HCT116 (cell line): ENCODE measurements at regions of chr2 and their contacts with region 1.

Region 1: DNA sequence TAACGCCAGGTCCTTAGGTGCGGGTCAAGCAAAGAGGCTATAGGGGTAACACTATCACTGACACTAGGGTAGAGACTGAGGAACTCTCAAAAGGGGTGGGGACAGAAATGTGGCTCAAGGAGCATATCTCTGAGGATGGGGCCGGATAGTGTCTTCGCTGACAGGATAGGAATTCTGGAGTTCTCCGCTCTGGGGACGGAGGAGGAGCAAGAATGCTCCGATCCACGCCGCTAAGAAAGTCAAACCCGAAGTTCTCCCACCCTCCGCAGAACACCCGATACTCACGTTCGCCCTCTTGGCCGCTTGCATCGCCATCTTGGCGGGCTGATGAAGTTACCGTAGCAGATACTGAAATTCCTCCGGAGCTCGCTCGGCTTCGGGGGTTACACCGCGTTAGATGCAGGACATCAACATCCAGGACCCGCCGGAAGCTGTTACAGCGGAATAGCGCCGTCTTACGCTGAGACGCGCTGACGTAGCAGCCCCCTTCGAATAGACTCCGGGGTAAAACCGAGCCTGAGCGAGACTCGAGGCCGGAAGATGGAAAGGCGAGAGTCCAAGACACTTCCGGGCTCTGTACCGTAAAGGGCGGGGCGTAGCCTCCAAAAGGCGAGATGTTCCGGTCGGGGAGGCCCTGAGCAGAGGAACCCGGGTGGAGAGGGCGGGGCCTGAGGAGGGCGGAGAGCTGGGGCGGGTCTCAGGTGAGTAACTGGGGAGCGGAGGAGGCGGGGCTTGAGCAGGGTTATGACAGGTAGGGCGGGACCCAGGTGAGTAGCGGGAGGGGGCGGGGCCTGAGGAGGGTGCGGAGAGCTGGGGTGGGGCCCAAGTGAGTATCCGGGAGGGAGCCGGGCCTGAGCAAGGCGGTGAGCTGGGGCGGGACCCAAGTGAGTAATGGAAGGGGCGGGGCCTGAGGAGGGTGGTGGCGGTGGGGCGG is at the start of gene SF3B6:
- DNase-seq: peak; percentile 99
- ATAC-seq: peak; percentile 86
- H3K4me3 ChIP-seq: peak within 1 kb of the TSS; percentile 73 to 77
- H3K27ac ChIP-seq: peak within 1 kb of the TSS; percentile 81
- H3K4me1 ChIP-seq: peaks cover 4 to 15% of the 10 kb centered on the region in 2 experiments; a peak in 3 of 4 replicates
- H3K27me3 ChIP-seq: no peaks in the 10 kb centered on the region
- CTCF ChIP-seq: no peak
- POLR2A ChIP-seq: peak; percentile 63
- RAD21 ChIP-seq: no peak
- total RNA-seq, gene SF3B6: 129 TPM

Region 2: GRCh38 chr2:23939987-23940717 is 136.0 kb before region 1 on chr2 and contains the start of gene UBXN2A:
- CTCF ChIA-PET with region 1: no interaction called
- POLR2A ChIA-PET with region 1: no interaction called
- RAD21 ChIA-PET with region 1: no interaction called
- intact Hi-C with region 1: loop called (anchors 5 kb)
- DNase-seq: peak; percentile 45
- ATAC-seq: peak; percentile 88
- H3K4me3 ChIP-seq: peak within 1 kb of the TSS; percentile 61 to 75
- H3K27ac ChIP-seq: peak within 1 kb of the TSS; percentile 70
- H3K4me1 ChIP-seq: peaks cover 4 to 30% of the 10 kb centered on the region in 2 experiments; a peak in 3 of 4 replicates
- H3K27me3 ChIP-seq: no peaks in the 10 kb centered on the region
- CTCF ChIP-seq: no peak
- POLR2A ChIP-seq: peak; percentile 84
- RAD21 ChIP-seq: no peak
- total RNA-seq, gene UBXN2A: 14.1 TPM

Region 3: GRCh38 chr2:24046930-24047702 is 29.1 kb before region 1 on chr2 and contains the start of gene WDCP:
- CTCF ChIA-PET with region 1: no interaction called
- POLR2A ChIA-PET with region 1: interaction called, 32 read pairs
- RAD21 ChIA-PET with region 1: interaction called, 3 to 4 read pairs
- intact Hi-C with region 1: loop called (anchors 2 kb)
- DNase-seq: peak; percentile 95
- ATAC-seq: peak; percentile 93
- H3K4me3 ChIP-seq: peak within 1 kb of the TSS; percentile 86 to 93
- H3K27ac ChIP-seq: peak within 1 kb of the TSS; percentile 35
- H3K4me1 ChIP-seq: peaks cover 13 to 30% of the 10 kb centered on the region in 2 experiments
- H3K27me3 ChIP-seq: no peaks in the 10 kb centered on the region
- CTCF ChIP-seq: no peak
- POLR2A ChIP-seq: peak; percentile 86
- RAD21 ChIP-seq: no peak
- total RNA-seq, gene WDCP: 19.9 TPM

Region 4: DNA sequence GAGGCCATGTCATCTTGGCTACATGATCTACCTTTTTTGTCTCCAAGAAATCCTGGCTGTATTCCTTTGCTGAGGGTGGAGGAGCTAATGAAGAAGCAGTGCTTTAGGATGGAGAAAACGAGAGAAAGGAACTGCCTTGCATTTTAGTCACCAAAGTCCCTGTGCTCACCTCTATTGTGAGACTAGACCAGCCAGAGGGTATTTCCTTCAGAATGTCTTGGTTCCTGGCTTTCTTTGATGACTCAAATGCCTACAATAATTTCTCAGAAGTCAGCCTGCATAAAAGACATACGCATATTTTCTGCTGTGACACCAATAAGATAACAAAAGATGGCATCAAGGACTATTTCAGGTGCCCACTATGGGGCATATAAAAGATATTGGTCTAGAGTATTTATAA is 10.8 kb before region 1 on chr2:
- CTCF ChIA-PET with region 1: no interaction called
- POLR2A ChIA-PET with region 1: interaction called, 10 read pairs
- RAD21 ChIA-PET with region 1: no interaction called
- intact Hi-C with region 1: no loop called
- DNase-seq: no peak
- ATAC-seq: no peak
- H3K4me3 ChIP-seq: no peak overlapping the region
- H3K27ac ChIP-seq: no peak overlapping the region
- H3K4me1 ChIP-seq: no peaks in the 10 kb centered on the region
- H3K27me3 ChIP-seq: no peaks in the 10 kb centered on the region
- CTCF ChIP-seq: no peak
- POLR2A ChIP-seq: no peak
- RAD21 ChIP-seq: no peak

Region 5: GRCh38 chr2:24886691-24887304 is 810.6 kb after region 1 on chr2:
- CTCF ChIA-PET with region 1: no interaction called
- POLR2A ChIA-PET with region 1: no interaction called
- RAD21 ChIA-PET with region 1: no interaction called
- intact Hi-C with region 1: no loop called
- DNase-seq: no peak
- ATAC-seq: no peak
- H3K4me3 ChIP-seq: no peak overlapping the region
- H3K27ac ChIP-seq: no peak overlapping the region
- H3K4me1 ChIP-seq: no peaks in the 10 kb centered on the region
- H3K27me3 ChIP-seq: no peaks in the 10 kb centered on the region
- CTCF ChIP-seq: no peak
- POLR2A ChIP-seq: no peak
- RAD21 ChIP-seq: no peak